Activated B cell treated with CpG ODN at 0.5 μM for 24 hours (primary cell): ENCODE measurements at regions of chr7 and their contacts with region 1.

Region 1: DNA sequence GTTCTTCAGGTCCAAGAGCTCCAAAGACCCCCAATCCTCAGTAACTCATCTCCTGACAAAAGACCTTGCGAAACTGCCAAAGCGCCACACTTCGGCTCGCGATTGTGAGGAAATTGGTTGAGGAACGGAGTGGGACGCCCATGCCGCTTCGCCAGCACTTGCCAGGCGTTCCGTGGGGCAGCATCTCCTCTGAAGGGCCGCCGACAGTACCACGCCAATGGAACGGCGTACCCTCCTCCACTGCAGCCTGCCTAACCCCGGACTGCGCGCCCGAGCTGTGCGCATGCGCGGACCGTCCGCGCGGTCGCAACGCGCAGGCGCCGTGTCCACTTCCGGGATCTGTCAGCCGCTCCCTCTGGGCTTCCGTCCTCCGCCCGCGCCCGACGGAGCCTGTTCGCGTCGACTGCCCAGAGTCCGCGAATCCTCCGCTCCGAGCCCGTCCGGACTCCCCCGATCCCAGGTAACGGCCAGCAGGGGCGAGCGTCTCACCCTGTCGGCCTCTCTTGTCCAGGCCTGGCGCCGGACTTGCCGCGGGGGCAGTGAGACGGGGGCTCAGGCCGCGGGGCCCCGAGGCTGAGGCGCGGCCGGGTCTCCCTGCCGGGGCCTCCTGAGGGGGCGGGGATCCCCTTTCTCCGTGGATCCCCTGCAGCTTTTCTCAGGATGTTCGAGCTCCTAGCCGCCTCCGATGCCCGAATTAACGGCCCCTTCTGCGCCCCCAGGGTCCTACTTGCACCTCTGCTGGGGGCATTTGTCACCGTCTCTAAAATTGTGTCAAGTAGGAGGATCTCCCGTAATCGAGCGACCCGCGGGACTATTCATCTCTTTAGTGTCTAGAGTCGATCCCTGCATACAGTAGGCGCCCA is at the start of gene ARPC1A:
- DNase-seq: peak; percentile 93
- ATAC-seq: peak; percentile 93
- H3K4me3 Mint-ChIP-seq: peak within 1 kb of the TSS; percentile 93
- H3K27ac Mint-ChIP-seq: peak within 1 kb of the TSS; percentile 89
- H3K4me1 Mint-ChIP-seq: peaks cover 42% of the 10 kb centered on the region
- H3K27me3 Mint-ChIP-seq: no peaks in the 10 kb centered on the region
- CTCF ChIP-seq: no peak
- total RNA-seq, gene ARPC1A: 47.3 and 51.6 TPM in 2 replicates

Region 2: DNA sequence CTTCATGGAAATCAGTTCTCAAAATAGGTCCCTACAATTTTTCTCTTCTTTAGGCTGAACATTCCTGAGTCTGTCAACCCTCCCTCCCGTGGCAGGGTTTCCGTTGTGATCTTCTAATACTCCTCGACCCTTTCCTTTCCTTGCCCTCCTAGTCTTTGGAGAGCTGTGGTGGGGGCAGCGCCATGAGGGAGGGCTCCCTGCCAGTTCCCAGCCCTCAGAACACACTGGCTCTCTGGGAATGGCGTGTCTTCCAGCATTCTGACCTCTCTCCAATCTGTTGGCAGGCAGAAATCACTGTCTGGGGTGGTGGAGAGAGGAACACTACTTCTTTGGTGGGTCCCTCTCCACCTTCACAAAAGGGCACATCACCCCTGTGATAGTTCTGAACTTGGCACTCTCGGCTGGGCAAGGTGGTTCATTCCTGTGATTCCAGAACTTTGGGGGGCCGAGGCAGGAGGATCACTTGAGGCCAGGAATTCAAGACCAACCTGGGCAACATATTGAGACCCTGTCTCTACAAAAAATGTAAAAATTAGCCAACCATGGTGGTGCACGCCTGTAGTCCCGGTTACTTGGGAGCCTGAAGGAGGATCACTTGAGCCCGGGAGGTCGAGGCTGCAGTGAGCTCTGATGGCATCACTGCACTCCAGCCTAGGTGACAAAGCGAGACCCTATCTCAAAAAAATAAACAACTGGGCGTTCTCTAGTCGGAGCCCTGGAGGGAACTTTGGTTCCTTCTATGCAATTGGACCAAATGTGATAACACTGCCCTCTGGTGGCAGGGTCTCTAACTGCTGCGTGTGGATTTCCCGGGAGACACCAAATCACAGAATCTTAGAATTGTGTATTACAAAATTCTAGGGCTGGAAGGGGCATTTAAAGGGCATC is 13.2 kb before region 1 on chr7:
- CTCF ChIA-PET with region 1: interaction called, 3 read pairs
- POLR2A ChIA-PET with region 1: no interaction called
- intact Hi-C with region 1: loop called (anchors 1 kb)
- DNase-seq: peak; percentile 53
- ATAC-seq: peak; percentile 71
- H3K4me3 Mint-ChIP-seq: no peak overlapping the region
- H3K27ac Mint-ChIP-seq: no peak overlapping the region
- H3K4me1 Mint-ChIP-seq: peaks cover 2% of the 10 kb centered on the region
- H3K27me3 Mint-ChIP-seq: peaks cover 3% of the 10 kb centered on the region
- CTCF ChIP-seq: peak; percentile 25

Region 3: DNA sequence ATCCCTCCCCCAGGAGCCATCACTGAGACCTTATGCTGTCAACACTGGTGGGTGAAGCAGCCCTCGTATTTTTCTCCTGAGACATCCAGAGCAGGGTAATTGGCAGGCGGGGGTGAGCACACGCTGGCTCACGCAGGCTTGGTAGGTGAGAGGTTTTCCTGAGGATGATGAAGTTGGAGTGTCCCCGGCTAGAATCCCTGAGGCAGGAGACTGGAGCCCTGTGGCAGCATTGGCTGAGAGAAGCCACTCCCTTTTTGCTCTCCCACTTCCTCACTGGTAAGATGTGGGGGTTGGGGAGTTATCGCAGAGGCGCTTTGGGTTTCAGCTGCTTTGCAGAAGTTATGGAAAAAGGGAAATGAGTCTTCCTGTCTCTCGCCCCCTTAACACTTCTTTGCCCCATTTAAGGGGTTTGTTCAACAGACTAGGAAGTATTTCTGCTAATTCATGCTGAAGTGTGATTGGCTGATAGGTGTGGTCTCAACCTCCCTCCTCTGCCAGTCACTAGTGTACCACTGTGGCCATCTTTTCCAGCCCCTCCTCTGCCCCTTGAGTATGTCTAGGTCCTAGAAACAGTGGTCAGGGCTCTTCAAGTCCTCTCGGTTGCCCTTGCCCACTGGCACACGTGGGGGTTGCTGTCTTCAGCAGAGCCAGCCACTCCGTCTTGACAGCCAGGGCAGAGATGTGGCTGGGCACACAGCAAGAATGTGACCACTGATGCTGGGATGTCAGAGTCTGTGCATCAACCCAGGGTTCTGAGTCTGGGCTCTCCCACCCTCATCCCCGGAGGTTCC is 54.5 kb after region 1 on chr7:
- CTCF ChIA-PET with region 1: no interaction called
- POLR2A ChIA-PET with region 1: interaction called, 11 read pairs
- intact Hi-C with region 1: loop called (anchors 2 kb)
- DNase-seq: peak; percentile 34
- ATAC-seq: peak; percentile 35
- H3K4me3 Mint-ChIP-seq: peak overlapping the region; percentile 83
- H3K27ac Mint-ChIP-seq: peak overlapping the region; percentile 98
- H3K4me1 Mint-ChIP-seq: peaks cover 71% of the 10 kb centered on the region
- H3K27me3 Mint-ChIP-seq: no peaks in the 10 kb centered on the region
- CTCF ChIP-seq: no peak

Region 4: DNA sequence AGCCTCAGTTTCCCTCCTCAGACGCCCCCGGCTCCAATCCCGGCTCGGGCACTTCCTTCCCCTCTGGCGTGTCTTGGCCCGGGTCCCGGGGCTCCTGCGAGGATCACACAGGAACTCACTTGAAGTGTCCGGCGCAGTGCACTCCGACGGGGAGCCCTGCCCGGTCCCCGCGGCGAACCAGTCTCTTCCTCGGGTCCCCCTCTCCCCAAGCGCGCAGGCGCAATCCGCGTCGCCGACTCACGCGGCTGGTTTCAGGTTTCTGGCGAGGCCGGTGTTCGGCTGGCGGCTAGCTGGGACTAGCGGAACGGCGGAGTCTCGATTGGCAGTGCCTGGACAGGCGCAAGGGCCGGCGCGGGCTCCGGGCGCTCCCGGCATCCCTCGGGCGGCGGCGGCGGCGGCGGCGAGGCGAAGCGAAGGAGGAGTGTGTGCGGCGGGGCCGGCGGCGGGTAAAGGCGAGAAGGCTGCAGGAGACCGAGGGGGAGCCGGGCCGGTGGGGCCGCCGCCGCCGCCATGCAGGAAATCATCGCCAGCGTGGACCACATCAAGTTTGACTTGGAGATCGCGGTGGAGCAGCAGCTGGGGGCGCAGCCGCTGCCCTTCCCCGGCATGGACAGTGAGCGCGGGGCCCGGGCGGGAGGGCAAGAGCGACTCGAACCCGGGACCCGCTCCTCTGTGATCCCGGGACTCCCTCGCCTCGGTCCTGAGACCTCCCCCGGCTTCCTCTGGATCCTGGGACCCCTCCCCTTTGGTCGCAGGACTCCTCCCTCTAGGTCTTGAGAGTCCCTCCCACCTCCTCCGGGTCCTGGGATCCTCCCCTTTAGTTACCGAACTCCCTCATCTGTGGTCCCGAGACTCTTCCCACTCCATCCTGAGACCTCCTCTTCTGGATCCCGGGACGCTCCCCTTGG is 113.1 kb after region 1 on chr7 and contains the starts of genes CPSF4 and PTCD1:
- CTCF ChIA-PET with region 1: no interaction called
- POLR2A ChIA-PET with region 1: interaction called, 3 read pairs
- intact Hi-C with region 1: loop called (anchors 1 kb)
- DNase-seq: peak; percentile 84
- ATAC-seq: peak; percentile 94
- H3K4me3 Mint-ChIP-seq: peak within 1 kb of the TSS; percentile 98
- H3K27ac Mint-ChIP-seq: peak within 1 kb of the TSS; percentile 94
- H3K4me1 Mint-ChIP-seq: peaks cover 32% of the 10 kb centered on the region
- H3K27me3 Mint-ChIP-seq: no peaks in the 10 kb centered on the region
- CTCF ChIP-seq: no peak
- total RNA-seq, gene CPSF4: 46.2 and 60.9 TPM in 2 replicates
- total RNA-seq, gene PTCD1: 8.4 and 13.4 TPM in 2 replicates

Region 5: GRCh38 chr7:99579956-99580777 is 254.4 kb after region 1 on chr7:
- CTCF ChIA-PET with region 1: no interaction called
- POLR2A ChIA-PET with region 1: no interaction called
- intact Hi-C with region 1: no loop called
- DNase-seq: peak; percentile 42
- ATAC-seq: peak; percentile 79
- H3K4me3 Mint-ChIP-seq: peak overlapping the region; percentile 90
- H3K27ac Mint-ChIP-seq: peak overlapping the region; percentile 50
- H3K4me1 Mint-ChIP-seq: peaks cover 33% of the 10 kb centered on the region
- H3K27me3 Mint-ChIP-seq: no peaks in the 10 kb centered on the region
- CTCF ChIP-seq: no peak

Region 6: GRCh38 chr7:100275120-100275519 is 949.3 kb after region 1 on chr7:
- CTCF ChIA-PET with region 1: no interaction called
- POLR2A ChIA-PET with region 1: interaction called, 10 read pairs
- intact Hi-C with region 1: no loop called
- DNase-seq: no peak
- ATAC-seq: no peak
- H3K4me3 Mint-ChIP-seq: no peak overlapping the region
- H3K27ac Mint-ChIP-seq: peak overlapping the region; percentile 41
- H3K4me1 Mint-ChIP-seq: peaks cover 25% of the 10 kb centered on the region
- H3K27me3 Mint-ChIP-seq: no peaks in the 10 kb centered on the region
- CTCF ChIP-seq: no peak